Calu3 (cell line): ENCODE measurements at regions of chr5 and their contacts with region 1.

Region 1: DNA sequence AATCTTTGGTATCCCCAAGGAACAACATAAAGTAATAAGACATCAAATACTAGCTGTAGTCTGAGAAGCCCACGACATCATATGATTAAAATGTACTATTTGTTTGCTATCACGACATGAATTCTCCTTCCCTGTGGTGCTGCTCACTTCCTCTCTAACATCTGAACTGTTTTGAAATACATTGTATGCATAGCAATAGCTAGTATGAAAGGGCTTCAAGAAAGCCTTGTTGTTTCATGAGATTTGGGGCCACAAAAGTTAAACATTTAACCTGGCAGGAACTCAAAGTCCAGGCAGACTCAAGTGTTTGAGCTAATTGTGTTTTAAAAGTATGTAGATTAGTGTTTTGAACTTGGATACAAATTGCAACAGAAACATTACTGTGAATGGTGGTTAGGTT is 237.4 kb upstream of the PTGER4 start:
- DNase-seq: peak; percentile 6
- H3K4me3 Mint-ChIP-seq: peak overlapping the region; percentile 39
- H3K27ac Mint-ChIP-seq: peak overlapping the region; percentile 88
- H3K4me1 Mint-ChIP-seq: peaks cover 24% of the 10 kb centered on the region
- H3K27me3 Mint-ChIP-seq: no peaks in the 10 kb centered on the region
- CTCF ChIP-seq: no peak

Region 2: GRCh38 chr5:40191150-40191549 is 251.2 kb before region 1 on chr5:
- CTCF ChIA-PET with region 1: no interaction called
- intact Hi-C with region 1: no loop called
- DNase-seq: no peak
- H3K4me3 Mint-ChIP-seq: no peak overlapping the region
- H3K27ac Mint-ChIP-seq: no peak overlapping the region
- H3K4me1 Mint-ChIP-seq: no peaks in the 10 kb centered on the region
- H3K27me3 Mint-ChIP-seq: no peaks in the 10 kb centered on the region
- CTCF ChIP-seq: no peak

Region 3: DNA sequence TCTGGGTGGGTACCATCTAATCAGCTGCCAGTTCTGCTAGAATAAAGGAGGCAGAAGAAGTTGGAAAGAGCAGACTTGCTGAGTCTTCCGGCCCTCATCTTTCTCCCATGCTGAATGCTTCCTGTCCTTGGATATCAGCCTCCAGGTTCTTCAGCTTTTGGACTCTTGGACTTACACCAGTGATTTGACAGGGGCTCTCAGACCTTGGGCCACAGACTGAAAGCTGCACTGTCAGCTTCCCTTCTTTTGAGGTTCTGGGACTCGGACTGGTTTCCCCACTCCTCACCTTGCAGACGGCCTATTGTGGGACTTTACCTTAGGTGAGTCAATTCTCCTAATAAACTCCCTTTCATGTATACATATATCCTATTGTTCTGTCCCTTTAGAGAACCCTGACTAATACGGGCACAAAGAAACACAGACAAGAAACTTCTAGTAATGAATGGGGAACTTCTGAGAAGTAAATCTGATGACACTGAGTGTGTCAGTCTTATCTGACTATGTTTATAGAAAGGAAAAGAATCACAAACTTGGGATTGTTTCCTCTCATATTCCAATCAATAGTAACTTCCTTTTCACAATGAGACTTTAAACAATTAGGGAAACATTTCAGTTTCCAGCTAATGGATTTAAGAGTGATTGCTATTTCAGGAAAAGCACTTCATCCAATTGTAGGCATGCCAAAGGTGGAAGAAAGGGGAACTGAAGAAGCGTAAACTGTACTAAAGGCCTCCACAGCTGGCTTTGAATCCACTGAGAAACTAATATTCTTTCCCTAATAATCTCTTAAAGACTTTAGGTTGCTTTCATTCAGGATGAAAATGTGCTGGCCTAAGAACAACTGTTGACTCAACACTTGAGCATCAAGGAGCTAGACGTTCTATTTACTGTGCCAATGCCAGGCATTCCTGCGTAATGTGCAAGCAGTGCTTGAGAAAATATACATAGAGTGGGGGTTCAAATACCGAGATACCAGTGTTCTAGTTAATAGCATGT is 109.4 kb after region 1 on chr5:
- CTCF ChIA-PET with region 1: interaction called, 4 read pairs
- intact Hi-C with region 1: loop called (anchors 5 kb)
- DNase-seq: peak; percentile 53
- H3K4me3 Mint-ChIP-seq: peak overlapping the region; percentile 26
- H3K27ac Mint-ChIP-seq: peak overlapping the region; percentile 81
- H3K4me1 Mint-ChIP-seq: peaks cover 30% of the 10 kb centered on the region
- H3K27me3 Mint-ChIP-seq: no peaks in the 10 kb centered on the region
- CTCF ChIP-seq: no peak

Region 4: DNA sequence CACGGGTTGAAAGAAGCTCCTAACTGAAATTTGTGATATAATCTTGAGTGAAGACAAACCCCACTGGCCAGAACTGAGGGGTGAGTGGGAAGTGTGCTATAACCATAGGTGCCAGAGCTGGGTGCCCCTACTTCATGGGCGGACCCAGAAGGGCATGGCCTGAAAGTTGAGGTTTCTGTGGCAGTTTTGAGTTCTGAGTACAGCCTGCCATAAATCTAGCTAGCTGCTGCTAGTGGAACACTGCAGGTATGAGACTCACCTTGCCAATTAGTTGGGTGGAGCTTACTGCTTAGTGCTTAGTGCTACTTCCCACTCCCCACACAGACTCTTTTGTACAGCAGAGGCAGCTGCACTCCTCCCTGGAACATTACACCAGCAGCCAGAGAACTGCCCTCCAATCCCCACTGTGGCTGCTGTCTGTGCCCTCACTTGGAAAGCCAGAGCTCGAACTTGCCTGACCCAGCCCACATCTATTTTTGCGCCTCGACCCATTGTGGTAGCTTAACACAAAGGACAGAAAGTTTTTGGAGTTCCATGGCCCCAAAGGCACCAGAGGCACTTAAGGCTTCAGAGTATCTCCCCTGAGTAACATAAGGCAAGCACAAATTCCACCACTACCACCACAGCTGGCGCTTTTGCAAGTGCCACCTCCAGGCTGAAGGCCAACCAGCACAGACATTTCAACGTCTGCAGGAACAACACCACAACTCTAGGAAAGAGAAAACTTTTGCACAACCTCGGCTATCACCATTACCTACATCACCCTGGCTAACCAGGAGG is 210.3 kb after region 1 on chr5:
- CTCF ChIA-PET with region 1: no interaction called
- intact Hi-C with region 1: no loop called
- DNase-seq: no peak
- H3K4me3 Mint-ChIP-seq: no peak overlapping the region
- H3K27ac Mint-ChIP-seq: no peak overlapping the region
- H3K4me1 Mint-ChIP-seq: no peaks in the 10 kb centered on the region
- H3K27me3 Mint-ChIP-seq: no peaks in the 10 kb centered on the region
- CTCF ChIP-seq: no peak